ENCODE measurements at regions of chr1 and their contacts with region 1.

Region 1: DNA sequence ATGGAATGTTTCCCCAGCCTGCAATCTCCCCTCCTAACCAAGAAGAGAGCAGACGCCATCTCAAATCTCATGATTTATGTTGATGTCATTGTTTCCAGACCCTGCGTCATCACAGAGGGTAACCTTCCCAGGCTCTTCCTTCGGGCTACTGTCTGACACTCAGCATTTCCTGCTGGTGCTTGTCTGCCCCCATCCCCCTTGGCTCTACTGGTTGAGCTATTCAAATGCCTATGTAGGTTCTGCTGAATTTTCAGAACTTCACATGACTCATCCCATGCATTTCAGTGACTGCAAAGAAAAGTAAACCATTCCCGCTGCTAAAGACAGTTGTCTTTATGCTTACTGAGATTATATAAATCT is 24.8 kb upstream of the ITPKB start:
- DNase-seq: peak; percentile 64
- ATAC-seq: peak; percentile 87
- H3K4me3 Mint-ChIP-seq: no peak overlapping the region
- H3K27ac Mint-ChIP-seq: no peak overlapping the region
- H3K4me1 Mint-ChIP-seq: peaks cover 31% of the 10 kb centered on the region
- H3K27me3 Mint-ChIP-seq: no peaks in the 10 kb centered on the region

Region 2: DNA sequence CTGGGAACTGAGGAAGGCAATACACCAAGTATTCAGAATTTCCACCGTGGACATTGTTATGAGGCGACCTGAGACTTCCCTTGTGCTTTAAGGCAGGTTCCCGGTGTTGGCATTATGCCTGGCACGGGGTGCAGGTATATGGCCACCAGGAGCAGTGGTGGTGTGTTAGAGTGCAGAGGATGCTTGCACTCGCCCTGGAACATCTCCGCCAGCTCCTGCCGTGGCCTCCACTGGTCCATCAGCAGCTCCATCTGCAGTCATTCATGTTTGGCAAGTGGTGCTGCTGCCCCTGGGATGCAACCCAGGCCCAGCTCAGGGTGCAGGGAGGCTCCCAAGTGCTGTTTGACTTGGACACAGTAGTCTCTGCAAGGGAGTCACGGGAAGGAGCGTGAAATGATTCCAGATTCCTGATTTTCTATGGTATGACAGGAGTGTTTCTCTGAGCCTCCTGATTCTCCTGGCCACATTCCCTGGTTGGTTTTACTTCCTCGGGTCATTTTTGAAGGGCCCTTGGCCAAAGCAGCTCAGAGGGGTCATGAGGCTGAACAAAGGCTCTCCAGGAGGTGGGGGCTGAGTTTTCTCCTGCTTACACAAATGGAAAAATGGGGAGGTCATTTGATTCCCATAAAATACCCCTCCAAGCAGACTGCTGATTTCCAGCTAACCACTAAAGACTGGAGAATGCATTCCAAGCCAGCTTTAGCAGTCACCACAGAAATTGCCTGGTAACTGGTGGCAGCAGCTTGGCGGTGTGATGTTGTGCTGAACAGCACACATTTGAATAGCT is 46.1 kb after region 1 on chr1:
- CTCF ChIA-PET with region 1: no interaction called
- POLR2A ChIA-PET with region 1: no interaction called
- intact Hi-C with region 1: loop called in 1 of 2 experiments (anchors 5 kb)
- DNase-seq: no peak
- ATAC-seq: no peak
- H3K4me3 Mint-ChIP-seq: no peak overlapping the region
- H3K27ac Mint-ChIP-seq: no peak overlapping the region
- H3K4me1 Mint-ChIP-seq: peaks cover 12% of the 10 kb centered on the region
- H3K27me3 Mint-ChIP-seq: no peaks in the 10 kb centered on the region